ENCODE measurements at regions of chr15 and their contacts with region 1.

Region 1: DNA sequence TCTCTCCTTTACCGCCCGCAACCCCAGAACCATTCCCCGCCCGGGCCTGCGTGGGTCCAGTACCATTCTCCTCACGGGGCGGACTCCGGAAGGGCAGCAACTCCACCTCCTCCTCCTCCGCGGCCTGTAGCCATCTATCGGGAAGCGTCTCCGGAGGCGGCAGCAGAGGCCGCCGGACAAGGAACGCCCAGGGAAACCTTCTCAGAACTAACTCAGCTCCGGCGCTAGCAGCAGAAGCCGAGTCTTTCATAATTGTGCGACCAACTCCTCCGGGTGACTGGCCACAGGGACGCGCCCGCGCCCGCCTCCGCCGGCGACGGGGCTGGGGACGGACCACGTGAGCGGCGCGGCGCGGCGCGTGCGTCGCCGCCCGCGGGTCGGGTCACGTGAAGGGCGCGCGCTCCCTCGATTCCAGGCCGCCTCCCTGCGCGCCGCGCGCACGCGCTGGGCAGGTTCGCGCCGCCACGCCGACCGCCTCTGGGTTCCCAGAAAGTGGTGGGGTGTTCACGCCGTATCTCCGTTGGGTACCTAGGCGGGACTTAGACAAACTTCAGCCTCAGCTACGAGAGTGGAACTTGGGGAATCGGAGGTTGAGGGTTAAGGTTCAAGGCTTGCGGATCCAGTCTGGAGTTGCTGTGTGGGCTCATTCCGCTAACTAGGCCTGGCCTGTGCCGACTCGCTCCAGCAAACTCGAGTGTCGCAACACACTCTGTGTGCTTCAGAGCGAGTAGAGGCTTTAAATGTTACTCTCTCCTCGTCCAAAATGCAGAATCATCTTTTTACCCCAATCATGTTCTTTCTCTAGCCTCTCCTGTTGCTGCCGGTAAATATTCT is at the start of gene TRPM7:
- DNase-seq: peak; percentile 88
- H3K4me3 Mint-ChIP-seq: peak within 1 kb of the TSS; percentile 98
- H3K27ac Mint-ChIP-seq: peak within 1 kb of the TSS; percentile 89
- H3K4me1 Mint-ChIP-seq: peaks cover 11% of the 10 kb centered on the region
- H3K27me3 Mint-ChIP-seq: no peaks in the 10 kb centered on the region
- CTCF ChIP-seq: no peak
- total RNA-seq, gene TRPM7: 35.5 and 36.3 TPM in 2 replicates

Region 2: GRCh38 chr15:50506121-50506520 is 180.6 kb before region 1 on chr15:
- CTCF ChIA-PET with region 1: no interaction called
- POLR2A ChIA-PET with region 1: no interaction called
- intact Hi-C with region 1: no loop called
- DNase-seq: no peak
- H3K4me3 Mint-ChIP-seq: no peak overlapping the region
- H3K27ac Mint-ChIP-seq: no peak overlapping the region
- H3K4me1 Mint-ChIP-seq: no peaks in the 10 kb centered on the region
- H3K27me3 Mint-ChIP-seq: no peaks in the 10 kb centered on the region
- CTCF ChIP-seq: no peak

Region 3: GRCh38 chr15:50562735-50563640 is 123.7 kb before region 1 on chr15:
- CTCF ChIA-PET with region 1: no interaction called
- POLR2A ChIA-PET with region 1: no interaction called
- intact Hi-C with region 1: no loop called
- DNase-seq: no peak
- H3K4me3 Mint-ChIP-seq: no peak overlapping the region
- H3K27ac Mint-ChIP-seq: peak overlapping the region; percentile 81
- H3K4me1 Mint-ChIP-seq: peaks cover 12% of the 10 kb centered on the region
- H3K27me3 Mint-ChIP-seq: no peaks in the 10 kb centered on the region
- CTCF ChIP-seq: no peak

Region 4: DNA sequence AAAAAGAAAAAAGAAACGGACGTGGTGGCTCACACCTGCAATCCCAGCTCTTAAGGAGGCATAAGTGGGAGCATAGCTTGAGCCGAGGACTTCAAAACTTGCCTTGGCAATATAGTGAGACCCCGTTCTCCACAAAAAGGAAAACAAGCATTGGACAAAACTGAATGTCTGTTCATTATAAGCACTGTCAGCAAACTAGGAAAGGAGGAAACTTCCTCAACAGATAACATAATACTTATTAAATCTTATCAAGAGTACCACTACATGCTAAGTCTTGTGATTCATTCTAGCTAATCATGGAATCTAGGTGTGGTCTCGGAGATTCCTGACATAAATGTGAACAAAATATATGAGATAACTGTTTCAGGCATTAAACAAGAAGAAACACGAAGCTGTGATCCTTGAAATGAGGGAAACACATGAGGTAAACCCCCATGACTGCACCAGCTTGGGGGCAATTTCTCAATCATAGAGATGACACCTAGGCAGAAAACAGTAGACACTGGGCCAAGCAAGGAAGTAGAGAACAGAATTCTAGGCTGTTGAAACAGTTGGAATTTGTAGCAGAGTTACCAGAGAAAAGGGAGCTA is 33.4 kb before region 1 on chr15:
- CTCF ChIA-PET with region 1: no interaction called
- POLR2A ChIA-PET with region 1: no interaction called
- intact Hi-C with region 1: no loop called
- DNase-seq: no peak
- H3K4me3 Mint-ChIP-seq: no peak overlapping the region
- H3K27ac Mint-ChIP-seq: no peak overlapping the region
- H3K4me1 Mint-ChIP-seq: peaks cover 7% of the 10 kb centered on the region
- H3K27me3 Mint-ChIP-seq: no peaks in the 10 kb centered on the region
- CTCF ChIP-seq: no peak

Region 5: DNA sequence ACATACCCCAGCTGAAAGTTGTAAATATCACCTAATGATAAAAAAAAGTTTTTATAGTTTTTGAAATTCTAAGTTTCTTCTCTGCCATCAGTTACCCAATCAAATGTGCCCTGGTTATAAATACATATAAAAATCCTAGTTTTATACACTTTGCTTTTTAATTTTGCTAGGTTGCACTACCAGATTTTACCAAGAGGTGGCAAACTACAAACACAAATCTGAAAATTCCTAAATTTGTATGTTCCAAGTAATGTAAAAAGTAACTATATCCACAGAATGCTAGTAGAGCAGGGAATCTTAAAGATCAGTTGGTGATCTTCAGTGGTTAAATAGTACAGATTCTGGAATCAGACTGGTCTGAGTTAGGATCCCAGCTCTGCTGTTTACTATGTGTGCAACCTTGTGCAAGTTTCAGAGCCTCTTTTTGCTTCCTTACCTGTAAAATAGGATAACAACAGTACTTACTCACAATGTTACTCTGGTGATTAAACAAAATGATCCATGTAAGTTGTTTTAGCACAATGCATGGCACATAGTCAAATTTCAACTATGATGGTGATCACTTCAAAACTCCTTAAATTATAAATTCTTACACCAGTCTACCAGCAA is 11.0 kb before region 1 on chr15:
- CTCF ChIA-PET with region 1: interaction called, 6 read pairs
- POLR2A ChIA-PET with region 1: interaction called, 23 read pairs
- intact Hi-C with region 1: no loop called
- DNase-seq: peak; percentile 45
- H3K4me3 Mint-ChIP-seq: no peak overlapping the region
- H3K27ac Mint-ChIP-seq: peak overlapping the region; percentile 68
- H3K4me1 Mint-ChIP-seq: peaks cover 12% of the 10 kb centered on the region
- H3K27me3 Mint-ChIP-seq: no peaks in the 10 kb centered on the region
- CTCF ChIP-seq: peak; percentile 69

Region 6: DNA sequence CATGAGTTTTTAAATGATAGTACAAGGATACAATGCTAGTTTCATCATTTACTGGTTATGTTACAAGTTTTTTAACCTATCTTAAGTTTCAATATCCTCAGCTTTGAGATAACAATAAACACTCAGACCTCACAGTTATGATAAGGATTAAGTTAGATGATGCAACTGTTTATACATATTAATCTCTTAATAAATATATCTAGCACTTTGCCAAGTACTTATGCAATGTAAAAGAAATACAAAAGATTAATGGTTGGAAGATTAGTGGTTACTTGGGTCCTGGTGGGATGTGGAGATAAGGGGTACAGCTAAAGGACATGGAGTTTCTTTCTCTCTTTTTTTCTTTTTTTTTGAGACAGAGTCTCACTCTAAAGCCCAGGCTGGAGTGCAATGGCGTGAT is 66.8 kb after region 1 on chr15:
- CTCF ChIA-PET with region 1: no interaction called
- POLR2A ChIA-PET with region 1: interaction called, 13 read pairs
- intact Hi-C with region 1: no loop called
- DNase-seq: no peak
- H3K4me3 Mint-ChIP-seq: no peak overlapping the region
- H3K27ac Mint-ChIP-seq: peak overlapping the region; percentile 63
- H3K4me1 Mint-ChIP-seq: peaks cover 15% of the 10 kb centered on the region
- H3K27me3 Mint-ChIP-seq: no peaks in the 10 kb centered on the region
- CTCF ChIP-seq: no peak

Region 7: DNA sequence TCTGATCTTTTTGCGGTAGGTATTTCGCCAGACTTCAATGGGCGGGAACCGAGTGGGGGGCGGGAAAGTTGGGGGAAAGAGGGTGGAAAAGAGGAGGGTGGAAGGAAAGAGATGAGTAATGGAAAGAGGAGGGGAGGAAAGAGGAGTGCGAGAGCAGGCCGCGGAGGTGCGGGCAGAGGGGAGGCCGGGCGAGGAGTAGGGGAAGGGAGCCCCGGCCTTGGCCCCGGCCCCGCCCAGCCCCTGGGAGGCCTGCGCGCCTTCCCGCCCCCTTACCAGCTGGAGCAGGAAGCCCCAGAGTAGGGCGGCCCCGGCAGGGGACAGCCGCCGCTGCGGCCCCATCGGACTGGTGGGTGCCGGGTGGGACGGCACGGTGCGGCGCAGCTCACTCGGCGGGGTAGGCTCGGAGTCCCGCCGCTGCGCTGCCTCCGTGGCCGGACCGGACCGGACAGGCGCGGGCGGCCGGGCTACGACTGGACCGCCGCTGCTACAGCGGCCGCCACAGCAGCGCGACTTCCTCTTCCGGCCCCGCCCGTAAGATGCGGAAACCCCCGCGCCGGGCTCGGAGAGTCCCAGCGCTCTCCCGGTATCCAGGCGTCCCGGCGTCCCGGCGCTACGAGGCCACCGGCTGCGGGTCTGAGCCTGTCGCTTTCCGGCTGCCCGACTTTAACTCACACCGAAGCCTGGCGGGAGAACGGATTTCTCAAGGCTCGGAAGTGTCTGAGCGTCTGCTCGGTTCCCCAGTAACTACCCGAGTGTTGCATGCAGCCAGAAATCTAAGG is 78.7 kb after region 1 on chr15 and contains the start of gene SPPL2A:
- CTCF ChIA-PET with region 1: interaction called, 4 read pairs
- POLR2A ChIA-PET with region 1: interaction called, 31 read pairs
- intact Hi-C with region 1: loop called (anchors 2 kb)
- DNase-seq: peak; percentile 87
- H3K4me3 Mint-ChIP-seq: peak within 1 kb of the TSS; percentile 78
- H3K27ac Mint-ChIP-seq: peak within 1 kb of the TSS; percentile 59
- H3K4me1 Mint-ChIP-seq: peaks cover 34% of the 10 kb centered on the region
- H3K27me3 Mint-ChIP-seq: no peaks in the 10 kb centered on the region
- CTCF ChIP-seq: no peak
- total RNA-seq, gene SPPL2A: 93.0 and 122 TPM in 2 replicates

Region 8: GRCh38 chr15:50876989-50877360 is 190.3 kb after region 1 on chr15:
- CTCF ChIA-PET with region 1: interaction called, 5 read pairs
- POLR2A ChIA-PET with region 1: interaction called, 31 read pairs
- intact Hi-C with region 1: no loop called
- DNase-seq: peak; percentile 90
- H3K4me3 Mint-ChIP-seq: peak overlapping the region; percentile 49
- H3K27ac Mint-ChIP-seq: peak overlapping the region; percentile 52
- H3K4me1 Mint-ChIP-seq: peaks cover 26% of the 10 kb centered on the region
- H3K27me3 Mint-ChIP-seq: peaks cover 13% of the 10 kb centered on the region
- CTCF ChIP-seq: peak; percentile 95

Region 9: DNA sequence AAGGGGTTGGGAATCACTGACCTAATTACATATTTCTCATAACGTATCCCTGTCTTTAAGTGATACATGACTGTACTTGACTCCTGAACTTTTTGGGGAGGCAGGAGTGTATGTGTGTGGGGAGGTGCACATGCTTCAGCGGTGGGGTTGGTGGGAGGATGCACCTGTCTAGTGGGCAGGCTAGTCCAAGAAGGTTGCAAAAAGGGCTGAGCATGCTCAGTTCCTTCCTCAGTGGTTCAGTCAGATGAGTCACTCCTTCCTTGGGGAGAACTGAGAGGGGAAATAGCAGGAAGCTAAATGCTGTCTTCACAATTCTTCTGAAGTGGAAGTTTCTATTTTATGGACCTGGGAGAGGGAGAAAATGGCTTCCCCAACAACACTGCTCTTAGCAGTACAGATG is 197.2 kb after region 1 on chr15:
- CTCF ChIA-PET with region 1: interaction called, 7 read pairs
- POLR2A ChIA-PET with region 1: interaction called, 38 read pairs
- intact Hi-C with region 1: no loop called
- DNase-seq: peak; percentile 89
- H3K4me3 Mint-ChIP-seq: peak overlapping the region; percentile 74
- H3K27ac Mint-ChIP-seq: peak overlapping the region; percentile 96
- H3K4me1 Mint-ChIP-seq: peaks cover 57% of the 10 kb centered on the region
- H3K27me3 Mint-ChIP-seq: no peaks in the 10 kb centered on the region
- CTCF ChIP-seq: no peak

Region 10: DNA sequence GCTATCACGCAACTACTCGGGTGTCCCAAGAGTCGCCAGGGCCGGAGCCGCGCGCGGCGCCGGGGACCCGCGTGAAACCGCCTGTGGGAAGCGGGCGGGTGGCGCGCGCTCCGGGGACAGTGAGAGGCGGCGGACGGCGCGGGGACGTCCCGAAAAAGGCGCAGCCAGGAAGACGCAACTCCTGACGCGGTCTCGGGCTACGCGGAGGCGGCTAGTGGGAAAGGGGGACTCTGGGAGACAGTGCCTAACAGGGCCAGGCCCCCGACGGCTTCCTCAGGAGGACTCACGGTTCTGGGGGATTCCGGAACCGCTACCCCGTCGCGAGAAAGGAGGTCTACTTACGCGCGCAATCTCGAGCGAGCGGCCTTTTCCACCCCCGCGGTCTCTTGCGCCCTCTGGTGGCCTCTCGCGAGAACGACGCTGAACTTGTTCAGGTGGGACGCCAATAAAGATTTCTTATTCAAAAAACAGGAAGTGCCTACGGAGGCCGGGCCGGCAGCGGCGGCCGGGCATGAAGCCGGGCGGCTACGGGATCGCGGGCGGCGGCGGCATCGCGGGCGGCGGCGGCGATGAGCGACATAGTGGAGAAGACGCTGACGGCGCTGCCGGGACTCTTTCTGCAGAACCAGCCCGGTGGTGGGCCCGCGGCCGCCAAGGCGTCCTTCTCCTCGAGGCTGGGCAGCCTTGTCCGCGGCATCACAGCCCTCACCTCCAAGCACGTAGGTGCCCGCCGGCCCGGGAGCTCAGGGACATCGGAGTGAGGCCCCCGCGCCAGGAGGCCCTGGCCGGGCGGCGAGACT is 221.7 kb after region 1 on chr15 and contains the start of gene AP4E1:
- CTCF ChIA-PET with region 1: interaction called, 5 read pairs
- POLR2A ChIA-PET with region 1: interaction called, 21 read pairs
- intact Hi-C with region 1: no loop called
- DNase-seq: peak; percentile 91
- H3K4me3 Mint-ChIP-seq: peak within 1 kb of the TSS; percentile 81
- H3K27ac Mint-ChIP-seq: peak within 1 kb of the TSS; percentile 81
- H3K4me1 Mint-ChIP-seq: no peaks in the 10 kb centered on the region
- H3K27me3 Mint-ChIP-seq: no peaks in the 10 kb centered on the region
- CTCF ChIP-seq: peak; percentile 97
- total RNA-seq, gene AP4E1: 25.5 and 28.2 TPM in 2 replicates

Measured in MCF 10A (cell line).